A549 (cell line): ENCODE measurements at regions of chr1 and their contacts with region 1.

Region 1: DNA sequence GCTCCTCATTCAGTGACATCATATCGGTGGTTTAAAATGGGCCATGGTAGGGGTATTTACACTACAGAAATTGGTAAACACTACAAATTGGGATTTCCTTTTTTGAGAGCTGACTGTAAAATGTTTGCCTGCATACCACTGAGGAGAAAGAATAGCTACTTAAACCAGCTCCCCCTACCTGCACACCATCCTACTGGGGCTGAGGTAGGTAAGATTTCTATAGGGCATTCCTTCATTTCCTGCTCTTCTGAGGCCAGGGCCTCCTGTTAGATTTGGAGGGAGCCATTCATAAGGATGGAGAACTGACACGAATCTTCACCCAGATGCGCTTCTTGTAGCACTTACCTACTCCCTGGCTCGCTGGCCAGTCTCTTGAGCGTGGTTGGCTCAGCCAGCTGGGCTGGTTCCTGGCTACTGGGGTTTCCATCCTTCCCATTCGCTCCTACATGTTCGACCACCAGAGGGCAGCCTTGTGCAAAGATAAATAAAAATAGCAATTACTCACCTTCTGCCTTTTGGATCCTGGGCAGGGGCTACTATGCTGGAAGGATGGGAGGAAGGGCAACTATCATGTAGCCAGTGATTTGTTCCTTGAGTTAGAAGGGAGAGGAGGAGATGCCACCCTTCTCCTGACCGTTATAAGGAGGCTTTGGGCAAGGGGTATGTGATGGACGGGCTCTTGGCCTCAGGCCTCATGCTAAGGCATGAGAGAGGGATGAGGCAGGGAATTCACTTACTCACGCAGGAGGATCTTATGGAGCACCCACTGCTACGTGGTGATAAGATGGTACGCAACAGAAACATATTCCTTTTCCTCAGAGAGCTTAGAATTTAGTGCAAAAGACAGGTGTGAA is 10.7 kb downstream of the OPTC start:
- DNase-seq: peak; percentile 75 to 90
- ATAC-seq: peak; percentile 87 to 94
- H3K4me3 ChIP-seq: no peak overlapping the region
- H3K27ac ChIP-seq: peak overlapping the region in 1 of 2 experiments; percentile 24; a peak in 2 of 6 replicates
- H3K4me1 ChIP-seq: peaks cover 22% of the 10 kb centered on the region
- CTCF ChIP-seq: peak; percentile 89
- EP300 ChIP-seq: no peak
- POLR2A ChIP-seq: no peak
- RAD21 ChIP-seq: peak; percentile 87 to 98

Region 2: DNA sequence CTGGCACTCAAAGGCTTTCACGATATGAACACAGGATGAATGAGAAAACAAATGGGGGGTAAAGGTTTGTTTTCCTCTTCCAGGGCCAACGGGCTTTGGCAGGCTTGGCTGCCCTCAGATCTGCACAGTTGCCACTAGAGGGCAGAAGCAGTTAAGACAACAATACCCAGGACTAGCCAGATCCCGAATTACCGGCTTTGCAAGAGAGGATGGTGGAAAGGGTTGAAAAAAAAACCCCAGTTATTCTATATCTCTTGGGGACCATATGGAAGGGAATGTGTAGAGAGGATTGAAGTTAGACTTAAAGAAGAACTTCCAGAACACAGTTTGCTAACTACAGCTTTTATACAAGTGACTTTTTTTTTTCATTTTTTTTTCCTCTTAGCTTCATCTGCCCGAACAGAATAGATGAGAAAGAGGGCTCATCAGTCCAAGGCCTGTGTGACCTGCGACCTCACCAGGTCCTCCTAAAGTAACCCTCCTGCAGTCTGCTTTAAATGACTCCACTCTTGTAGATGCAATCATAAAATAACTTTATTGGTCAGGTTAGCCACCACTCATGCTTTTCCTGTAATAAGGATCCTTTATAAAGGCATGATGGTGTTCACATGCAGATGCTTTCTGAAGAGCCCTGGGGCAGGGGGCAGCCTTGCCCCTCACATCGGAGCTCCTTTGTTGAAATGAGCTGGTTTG is 164.4 kb before region 1 on chr1:
- CTCF ChIA-PET with region 1: interaction called, 93 read pairs
- POLR2A ChIA-PET with region 1: no interaction called
- DNase-seq: peak; percentile 79 to 92
- ATAC-seq: peak; percentile 79 to 89; a peak in 5 of 6 replicates
- H3K4me3 ChIP-seq: no peak overlapping the region
- H3K27ac ChIP-seq: no peak overlapping the region
- H3K4me1 ChIP-seq: no peaks in the 10 kb centered on the region
- CTCF ChIP-seq: peak; percentile 90
- EP300 ChIP-seq: no peak
- POLR2A ChIP-seq: no peak
- RAD21 ChIP-seq: peak; percentile 89 to 91

Region 3: DNA sequence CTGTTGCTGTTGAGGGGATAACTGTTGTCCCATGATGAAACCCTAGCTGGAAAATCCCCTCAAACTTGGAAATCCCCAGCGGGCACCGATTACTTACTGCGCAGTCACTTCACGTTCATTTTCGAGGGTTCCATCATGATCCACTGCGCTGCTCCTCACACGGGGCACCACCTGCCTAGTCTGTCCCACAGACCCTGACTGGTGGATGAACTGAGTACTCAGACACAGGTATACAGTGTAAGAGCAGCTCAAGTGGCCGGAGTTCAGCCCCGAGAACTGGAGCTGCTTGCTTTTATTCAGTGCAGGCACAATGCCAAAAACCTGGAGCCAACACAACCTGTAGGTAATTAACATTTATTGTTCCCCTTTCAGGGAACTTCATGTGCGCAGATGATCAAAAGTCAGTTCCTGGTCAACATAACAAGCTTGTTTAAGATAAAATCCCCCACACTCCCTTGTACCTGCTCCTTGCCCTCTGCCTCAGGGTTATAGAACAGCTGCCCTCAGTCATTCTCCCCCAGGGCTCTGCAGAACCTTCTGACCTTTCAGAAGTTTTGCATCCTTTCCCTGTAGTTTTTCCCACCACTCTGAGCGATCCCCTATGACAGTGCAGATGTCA is 75.5 kb before region 1 on chr1:
- CTCF ChIA-PET with region 1: no interaction called
- POLR2A ChIA-PET with region 1: no interaction called
- DNase-seq: no peak
- ATAC-seq: 0 out of 6 replicates have a peak, but pooled peaks of 1 of the 2 experiments have one; percentile 21
- H3K4me3 ChIP-seq: no peak overlapping the region
- H3K27ac ChIP-seq: no peak overlapping the region
- H3K4me1 ChIP-seq: peaks cover 13% of the 10 kb centered on the region; the same call in 2 of the 3 replicates
- CTCF ChIP-seq: no peak
- EP300 ChIP-seq: no peak
- POLR2A ChIP-seq: no peak
- RAD21 ChIP-seq: no peak

Region 4: GRCh38 chr1:203519078-203519770 is 14.6 kb after region 1 on chr1:
- CTCF ChIA-PET with region 1: interaction called, 22 read pairs
- POLR2A ChIA-PET with region 1: no interaction called
- DNase-seq: no peak
- ATAC-seq: no peak
- H3K4me3 ChIP-seq: no peak overlapping the region
- H3K27ac ChIP-seq: peak overlapping the region in 1 of 2 experiments; percentile 73; a peak in 2 of 6 replicates
- H3K4me1 ChIP-seq: peaks cover 23% of the 10 kb centered on the region
- CTCF ChIP-seq: no peak
- EP300 ChIP-seq: no peak
- POLR2A ChIP-seq: no peak
- RAD21 ChIP-seq: no peak

Region 5: GRCh38 chr1:203549309-203549708 is 44.7 kb after region 1 on chr1:
- CTCF ChIA-PET with region 1: interaction called, 14 read pairs
- POLR2A ChIA-PET with region 1: no interaction called
- DNase-seq: no peak
- ATAC-seq: no peak
- H3K4me3 ChIP-seq: no peak overlapping the region
- H3K27ac ChIP-seq: no peak overlapping the region
- H3K4me1 ChIP-seq: no peaks in the 10 kb centered on the region
- CTCF ChIP-seq: no peak
- EP300 ChIP-seq: no peak
- POLR2A ChIP-seq: no peak
- RAD21 ChIP-seq: no peak

Region 6: DNA sequence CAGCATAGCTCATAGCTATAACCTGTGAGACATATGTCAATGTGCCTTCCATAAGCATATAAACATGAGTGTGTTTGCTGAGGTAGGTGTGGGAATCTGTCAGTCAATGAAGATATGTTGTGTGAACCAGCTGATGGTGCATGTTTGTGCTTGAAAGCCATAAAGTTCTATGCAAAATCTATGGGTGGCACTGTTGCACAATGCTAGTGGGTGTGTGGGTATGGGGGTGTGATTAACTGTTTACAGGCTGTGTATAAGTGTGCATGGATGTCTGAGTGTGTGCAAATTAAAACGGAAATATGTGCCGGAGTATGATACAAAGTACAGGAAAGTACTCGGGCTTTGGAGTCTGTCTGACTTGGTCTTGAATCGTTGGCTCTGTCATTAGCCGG is 121.0 kb after region 1 on chr1:
- CTCF ChIA-PET with region 1: interaction called, 28 read pairs
- POLR2A ChIA-PET with region 1: interaction called, 3 read pairs
- DNase-seq: peak in 1 of 2 experiments; percentile 58
- ATAC-seq: peak; percentile 11 to 30; a peak in 4 of 6 replicates
- H3K4me3 ChIP-seq: no peak overlapping the region
- H3K27ac ChIP-seq: peak overlapping the region; percentile 79 to 92
- H3K4me1 ChIP-seq: peaks cover 28% of the 10 kb centered on the region
- CTCF ChIP-seq: peak; percentile 42
- EP300 ChIP-seq: no peak
- POLR2A ChIP-seq: no peak
- RAD21 ChIP-seq: peak; percentile 64 to 71

Region 7: GRCh38 chr1:203692565-203693470 is 188.2 kb after region 1 on chr1:
- CTCF ChIA-PET with region 1: interaction called, 38 read pairs
- POLR2A ChIA-PET with region 1: no interaction called
- DNase-seq: peak; percentile 55 to 82
- ATAC-seq: peak; percentile 85 to 88
- H3K4me3 ChIP-seq: no peak overlapping the region
- H3K27ac ChIP-seq: peak overlapping the region; percentile 73 to 77
- H3K4me1 ChIP-seq: peaks cover 32% of the 10 kb centered on the region
- CTCF ChIP-seq: no peak
- EP300 ChIP-seq: no peak
- POLR2A ChIP-seq: no peak
- RAD21 ChIP-seq: 0 out of 5 replicates have a peak, but pooled peaks of 1 of the 2 experiments have one; percentile 10